ENCODE measurements at regions of chr20 and their contacts with region 1.

Region 1: GRCh38 chr20:62376112-62377063 is 9.3 kb upstream of the LAMA5 start:
- DNase-seq: peak in 1 of 2 donors; percentile 85
- H3K4me3 ChIP-seq: no peak overlapping the region
- H3K27ac ChIP-seq: peak overlapping the region; percentile 62 to 76
- H3K4me1 ChIP-seq: peaks cover 10 to 80% (median 69%) of the 10 kb centered on the region in 4 donors
- H3K27me3 ChIP-seq: no peaks in the 10 kb centered on the region
- CTCF ChIP-seq: peak; percentile 77 to 86

Region 2: DNA sequence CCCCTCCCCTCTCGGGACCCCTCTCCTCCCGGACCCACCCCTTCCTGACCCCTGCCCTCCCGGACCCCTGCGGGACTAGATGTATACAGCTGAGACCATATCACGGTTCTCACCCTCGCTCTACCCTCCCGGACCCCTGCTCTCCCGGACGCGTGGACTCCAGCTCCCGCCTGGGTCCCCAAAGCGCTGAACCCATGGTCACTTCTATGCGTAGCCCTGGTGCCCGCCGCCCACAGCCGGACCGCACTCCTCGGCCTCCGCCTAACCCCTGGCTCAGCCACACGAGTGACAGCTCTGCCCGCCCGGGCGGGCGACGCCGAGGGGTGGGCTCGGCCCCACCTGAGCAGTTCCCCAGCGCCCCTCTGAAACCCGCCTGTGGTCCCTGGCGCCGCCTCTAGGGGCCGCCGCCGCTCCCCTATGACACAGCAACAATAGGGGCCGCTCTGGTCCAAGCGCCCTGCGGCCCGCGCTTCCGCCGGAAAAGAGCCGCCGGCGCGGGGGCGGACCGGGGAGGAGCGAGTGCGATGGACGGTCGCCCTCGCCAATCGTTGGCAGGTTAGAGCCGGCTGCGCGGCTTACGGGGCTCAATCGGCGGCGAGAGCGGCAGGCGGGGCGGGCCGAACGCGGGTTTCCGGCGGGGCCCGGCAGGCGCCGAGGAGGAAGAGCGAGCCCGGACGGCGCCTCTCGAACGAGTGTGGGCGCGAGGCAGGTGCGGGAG is 73.9 kb before region 1 on chr20 and contains the start of gene ADRM1:
- intact Hi-C with region 1: loop called (anchors 2 kb)
- DNase-seq: peak; percentile 94 to 98
- H3K4me3 ChIP-seq: peak within 1 kb of the TSS; percentile 82 to 89
- H3K27ac ChIP-seq: peak within 1 kb of the TSS; percentile 99
- H3K4me1 ChIP-seq: peaks cover 11 to 32% (median 22%) of the 10 kb centered on the region in 4 donors
- H3K27me3 ChIP-seq: no peaks in the 10 kb centered on the region
- CTCF ChIP-seq: peak; percentile 94 to 98

Region 3: GRCh38 chr20:62571667-62572344 is 195.4 kb after region 1 on chr20:
- intact Hi-C with region 1: no loop called
- DNase-seq: no peak
- H3K4me3 ChIP-seq: no peak overlapping the region
- H3K27ac ChIP-seq: no peak overlapping the region
- H3K4me1 ChIP-seq: no peaks in the 10 kb centered on the region
- H3K27me3 ChIP-seq: peaks cover 0 to 32% of the 10 kb centered on the region in 2 donors
- CTCF ChIP-seq: no peak

Region 4: DNA sequence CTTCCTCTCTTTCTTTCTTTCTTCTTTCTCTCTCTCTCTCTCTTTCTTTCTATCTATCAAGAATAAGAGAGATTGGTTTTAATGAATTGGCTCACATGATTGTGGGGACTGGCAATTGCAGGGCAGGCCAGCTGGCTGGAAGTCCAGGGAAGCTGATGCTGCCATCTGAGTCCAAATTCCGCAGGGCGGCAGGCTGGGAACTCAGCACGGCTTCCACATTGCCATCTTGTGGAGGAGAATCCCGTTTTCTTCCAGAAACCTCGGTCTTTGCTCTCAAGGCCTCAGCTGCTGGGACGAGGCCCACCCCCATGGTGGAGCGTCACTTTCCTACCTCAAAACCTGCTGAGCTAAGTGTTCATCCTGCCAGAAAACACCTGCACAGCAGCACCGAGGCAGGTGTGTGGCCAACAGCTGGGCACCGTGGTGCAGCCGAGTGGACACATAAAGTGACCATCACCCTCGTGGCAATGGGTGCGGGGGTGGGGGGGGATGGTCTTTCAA is 207.1 kb after region 1 on chr20:
- intact Hi-C with region 1: no loop called
- DNase-seq: no peak
- H3K4me3 ChIP-seq: no peak overlapping the region
- H3K27ac ChIP-seq: no peak overlapping the region
- H3K4me1 ChIP-seq: peaks cover 0 to 27% (median 18%) of the 10 kb centered on the region in 4 donors
- H3K27me3 ChIP-seq: peaks cover 0 to 70% of the 10 kb centered on the region in 2 donors
- CTCF ChIP-seq: peak; percentile 22 to 32

Measured in tibial artery (tissue), 4 donors.